ENCODE measurements at regions of chr2 and their contacts with region 1.

Region 1: GRCh38 chr2:12501469-12502158 is 215.1 kb upstream of the TRIB2 start:
- DNase-seq: peak in 8 of 10 donors; percentile 10 to 77 (median 42)
- ATAC-seq: peak; percentile 85 to 88
- H3K4me3 Mint-ChIP-seq: peak overlapping the region; percentile 48 to 83 (median 72)
- H3K27ac Mint-ChIP-seq: peak overlapping the region; percentile 69 to 98 (median 91)
- H3K4me1 Mint-ChIP-seq: peaks cover 61 to 100% (median 97%) of the 10 kb centered on the region in 4 donors
- H3K27me3 Mint-ChIP-seq: no peaks in the 10 kb centered on the region

Region 2: DNA sequence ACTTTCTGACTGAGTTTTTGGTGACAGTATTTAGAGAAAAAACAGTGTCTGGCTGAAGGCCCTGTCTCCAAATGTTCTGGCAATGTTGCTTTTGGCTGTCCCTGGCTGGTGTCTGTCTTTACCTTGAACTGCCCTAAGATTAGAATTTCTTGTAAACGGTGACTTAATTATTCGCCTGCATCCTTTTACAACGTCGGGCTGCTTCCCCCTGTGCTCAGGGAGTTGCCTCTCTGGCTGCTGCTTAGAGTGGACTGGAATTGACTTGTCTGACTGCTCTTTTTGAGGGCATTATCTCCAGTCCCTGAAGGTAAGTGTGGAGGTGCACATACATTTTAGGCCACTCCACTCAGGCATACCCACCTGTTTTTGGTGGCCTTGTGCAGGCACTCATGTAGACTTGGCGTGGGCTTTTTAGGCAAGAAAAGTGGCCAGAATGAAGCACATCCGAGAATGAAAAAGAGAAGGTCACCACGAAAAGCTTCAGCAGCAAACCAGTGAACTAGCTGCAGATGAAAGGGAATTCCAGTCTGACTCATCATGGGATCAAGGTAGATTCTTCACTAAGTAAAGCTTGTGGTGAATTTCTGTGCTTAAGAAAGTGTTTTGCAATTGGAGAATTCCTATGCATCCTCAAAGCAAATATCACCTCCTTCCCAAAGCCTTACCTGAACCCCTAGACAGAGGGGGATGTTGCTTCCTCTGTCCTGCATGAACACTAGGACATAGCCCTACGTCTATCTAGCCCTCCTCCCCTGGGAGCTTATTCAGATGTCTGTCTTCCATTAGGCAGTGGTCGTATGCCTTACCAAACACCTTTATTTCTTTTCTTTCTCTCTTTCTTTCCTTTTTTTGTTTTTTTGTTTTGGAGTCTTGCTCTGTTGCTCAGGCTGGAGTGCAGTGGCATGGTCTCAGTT is 15.2 kb before region 1 on chr2:
- POLR2A ChIA-PET with region 1: interaction called, 32 read pairs
- DNase-seq: no peak
- ATAC-seq: no peak
- H3K4me3 Mint-ChIP-seq: peak overlapping the region in 5 of 10 donors; percentile 29 to 85 (median 67)
- H3K27ac Mint-ChIP-seq: peak overlapping the region in 9 of 10 donors; percentile 23 to 93 (median 89)
- H3K4me1 Mint-ChIP-seq: peaks cover 35 to 71% (median 67%) of the 10 kb centered on the region in 4 donors
- H3K27me3 Mint-ChIP-seq: no peaks in the 10 kb centered on the region

Measured in naive thymus-derived CD8-positive, alpha-beta T cell (primary cell).